Heart right ventricle (tissue), 16 donors: ENCODE measurements at regions of chr1 and their contacts with region 1.

Region 1: DNA sequence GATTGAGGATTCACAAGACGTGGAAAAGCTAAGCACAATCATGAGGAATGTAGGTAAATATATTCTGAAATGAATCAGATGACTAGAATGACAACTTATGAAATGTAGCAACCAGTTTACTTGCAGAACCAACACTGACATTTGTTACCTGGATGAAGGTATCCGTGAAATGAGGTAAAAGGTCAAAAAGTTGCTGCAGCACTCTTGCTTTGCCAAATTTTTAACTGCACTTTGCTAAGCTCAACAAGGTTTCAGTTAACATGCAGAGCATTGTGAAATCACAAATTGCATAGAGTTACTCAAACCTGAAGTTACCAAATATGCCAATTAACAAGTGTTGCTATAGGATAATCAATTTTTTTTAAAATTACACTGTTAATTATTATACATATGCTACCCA is 1280.1 kb downstream of the KCNT2 start:
- DNase-seq: no peak
- ATAC-seq: no peak
- H3K4me3 ChIP-seq: no peak overlapping the region
- H3K27ac ChIP-seq: no peak overlapping the region
- H3K4me1 ChIP-seq: no peaks in the 10 kb centered on the region
- H3K27me3 ChIP-seq: no peaks in the 10 kb centered on the region
- CTCF ChIP-seq: no peak

Region 2: DNA sequence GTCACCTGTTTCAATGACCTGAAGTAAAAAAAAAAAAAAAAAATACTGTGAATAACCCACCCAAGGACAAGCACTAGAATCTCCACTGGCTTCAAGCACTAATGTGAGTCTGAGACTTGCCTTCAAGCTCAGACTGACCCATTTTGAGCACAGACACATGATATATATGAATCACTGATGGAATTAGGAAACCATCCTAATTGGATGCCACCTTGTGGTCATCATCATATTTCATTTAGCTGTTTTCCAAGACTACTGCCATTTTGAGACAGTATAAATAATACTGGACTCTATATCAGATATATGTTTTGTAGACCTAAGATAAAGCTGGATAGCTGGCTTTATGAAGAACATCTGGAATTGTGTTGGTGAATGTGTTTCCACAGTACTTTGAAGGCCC is 48.1 kb after region 1 on chr1:
- intact Hi-C with region 1: loop called in 1 of 10 experiments (anchors 1 kb)
- DNase-seq: no peak
- ATAC-seq: no peak
- H3K4me3 ChIP-seq: no peak overlapping the region
- H3K27ac ChIP-seq: no peak overlapping the region
- H3K4me1 ChIP-seq: no peaks in the 10 kb centered on the region
- H3K27me3 ChIP-seq: no peaks in the 10 kb centered on the region
- CTCF ChIP-seq: no peak